ENCODE measurements at regions of chr15 and their contacts with region 1.

Region 1: DNA sequence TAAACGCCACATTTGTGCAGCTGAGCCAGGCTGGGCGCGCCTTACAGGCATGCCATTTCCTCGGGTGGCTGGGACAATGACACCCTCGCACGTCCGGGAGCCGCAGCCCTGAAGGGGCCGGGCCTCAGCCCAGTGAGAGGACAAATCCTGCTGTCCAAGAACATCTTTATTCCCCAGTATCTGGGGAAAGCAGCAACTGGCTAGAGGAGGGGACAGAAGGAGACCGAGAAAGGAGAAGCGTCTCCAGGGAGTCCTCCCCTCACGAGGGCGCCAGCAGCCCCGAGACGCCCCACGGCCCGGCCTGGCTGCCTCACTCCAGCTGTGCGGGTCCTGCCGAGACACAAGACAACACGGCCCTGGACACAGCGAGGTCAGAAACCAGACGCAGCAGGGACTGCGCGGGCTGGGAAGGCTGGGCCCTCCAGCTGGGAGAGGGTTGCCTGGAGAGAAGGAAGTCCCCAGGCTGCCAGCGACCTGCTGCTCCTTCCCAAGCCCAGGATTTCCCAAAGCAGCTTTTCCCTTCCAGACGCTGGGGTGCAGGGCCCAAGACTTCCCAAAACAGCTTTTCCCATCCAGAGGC is 130.2 kb downstream of the CHSY1 start:
- DNase-seq: peak; percentile 87
- ATAC-seq: peak; percentile 89 to 95 (median 93)
- H3K4me3 ChIP-seq: peak overlapping the region in 9 of 10 donors; percentile 13 to 50 (median 39)
- H3K27ac ChIP-seq: peak overlapping the region; percentile 5 to 94 (median 72)
- H3K4me1 ChIP-seq: peaks cover 13 to 67% (median 17%) of the 10 kb centered on the region in 9 donors
- H3K27me3 ChIP-seq: no peaks in the 10 kb centered on the region
- CTCF ChIP-seq: peak in 6 of 9 donors; percentile 39 to 67 (median 50)

Region 2: GRCh38 chr15:100627789-100628395 is 493.7 kb before region 1 on chr15:
- intact Hi-C with region 1: no loop called
- DNase-seq: peak in 1 of 2 donors; percentile 44
- ATAC-seq: peak in 7 of 8 donors; percentile 41 to 81 (median 78)
- H3K4me3 ChIP-seq: no peak overlapping the region
- H3K27ac ChIP-seq: no peak overlapping the region
- H3K4me1 ChIP-seq: peaks cover 0 to 12% (median 0%) of the 10 kb centered on the region in 9 donors
- H3K27me3 ChIP-seq: no peaks in the 10 kb centered on the region
- CTCF ChIP-seq: peak; percentile 69 to 89 (median 86)

Region 3: DNA sequence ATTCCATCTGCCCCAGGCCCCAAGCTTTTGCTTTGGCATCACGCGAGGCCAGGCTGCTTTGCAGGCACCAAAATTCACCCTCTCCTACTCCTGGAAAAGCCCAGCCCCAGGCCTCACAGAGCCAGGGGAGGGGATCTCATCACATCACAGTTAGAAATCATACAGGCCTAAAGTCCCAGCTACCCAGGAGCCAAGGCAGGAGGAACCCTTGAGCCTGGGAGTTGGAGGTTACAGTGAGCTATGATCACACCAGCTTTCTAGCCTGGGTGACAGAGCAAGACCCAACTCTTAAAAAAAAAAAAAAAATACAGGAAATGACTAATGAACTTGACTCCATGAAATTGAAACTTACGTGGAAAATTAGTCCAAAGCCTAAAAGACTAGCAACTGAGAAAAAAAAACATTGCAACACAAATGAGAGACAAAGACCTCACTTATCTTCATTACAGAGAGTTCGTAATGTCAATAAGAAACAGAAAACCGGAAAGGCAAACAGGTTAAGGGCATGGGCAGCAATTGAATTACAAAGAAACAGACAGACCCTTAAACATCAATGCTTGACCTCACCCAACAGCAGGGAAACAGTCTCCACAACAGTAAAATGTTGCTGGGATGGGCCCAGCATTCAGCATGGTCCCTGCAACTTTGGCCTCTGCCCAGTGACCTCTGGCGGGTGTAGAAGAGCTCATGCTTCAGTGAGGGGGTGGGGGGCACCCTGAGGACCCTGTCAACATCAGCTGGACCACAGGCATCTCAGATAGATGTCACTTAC is 50.9 kb before region 1 on chr15:
- intact Hi-C with region 1: no loop called
- DNase-seq: no peak
- ATAC-seq: peak; percentile 62 to 87 (median 78)
- H3K4me3 ChIP-seq: no peak overlapping the region
- H3K27ac ChIP-seq: peak overlapping the region; percentile 13 to 88 (median 68)
- H3K4me1 ChIP-seq: peaks cover 0 to 39% (median 29%) of the 10 kb centered on the region in 9 donors
- H3K27me3 ChIP-seq: no peaks in the 10 kb centered on the region
- CTCF ChIP-seq: no peak

Region 4: DNA sequence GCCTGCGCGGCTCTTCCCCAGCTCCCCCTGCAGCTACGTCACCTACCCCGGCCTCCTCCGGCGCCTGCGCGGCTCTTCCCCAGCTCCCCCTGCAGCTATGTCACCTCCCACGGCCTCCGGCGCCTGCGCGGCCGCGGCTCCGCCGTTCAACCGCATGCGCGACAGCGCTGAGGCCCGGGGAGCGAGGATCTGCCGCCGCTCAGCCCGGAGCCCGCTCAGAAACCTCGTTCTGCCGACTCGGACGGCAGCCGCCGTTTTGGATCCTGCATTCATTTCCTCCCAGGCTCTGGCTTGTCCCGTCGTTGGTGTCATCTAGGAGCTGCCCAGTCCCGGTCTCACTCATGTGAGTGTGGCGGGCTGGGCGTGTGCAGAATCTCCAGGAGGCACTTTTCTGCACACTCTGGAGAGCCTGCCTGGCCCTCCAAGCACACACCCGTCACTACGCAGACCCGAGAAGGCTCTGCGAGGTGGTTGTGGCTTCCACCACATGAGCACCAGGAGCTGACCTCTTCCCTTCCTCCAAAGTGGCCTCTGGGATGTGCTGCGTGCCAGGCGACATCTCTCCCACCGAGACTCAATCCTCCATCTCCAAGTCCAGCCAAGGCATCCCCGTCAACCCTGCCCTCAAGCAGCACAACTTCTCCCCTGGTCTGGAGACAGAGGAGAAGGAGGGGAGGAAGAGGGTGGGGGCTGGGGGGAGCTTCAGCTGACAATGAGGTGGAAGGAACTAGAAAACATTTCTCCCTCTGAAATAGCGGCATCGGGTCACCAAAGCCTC is 35.0 kb before region 1 on chr15:
- intact Hi-C with region 1: no loop called
- DNase-seq: no peak
- ATAC-seq: no peak
- H3K4me3 ChIP-seq: no peak overlapping the region
- H3K27ac ChIP-seq: no peak overlapping the region
- H3K4me1 ChIP-seq: peaks cover 8 to 30% (median 18%) of the 10 kb centered on the region in 9 donors
- H3K27me3 ChIP-seq: no peaks in the 10 kb centered on the region
- CTCF ChIP-seq: no peak

Region 5: DNA sequence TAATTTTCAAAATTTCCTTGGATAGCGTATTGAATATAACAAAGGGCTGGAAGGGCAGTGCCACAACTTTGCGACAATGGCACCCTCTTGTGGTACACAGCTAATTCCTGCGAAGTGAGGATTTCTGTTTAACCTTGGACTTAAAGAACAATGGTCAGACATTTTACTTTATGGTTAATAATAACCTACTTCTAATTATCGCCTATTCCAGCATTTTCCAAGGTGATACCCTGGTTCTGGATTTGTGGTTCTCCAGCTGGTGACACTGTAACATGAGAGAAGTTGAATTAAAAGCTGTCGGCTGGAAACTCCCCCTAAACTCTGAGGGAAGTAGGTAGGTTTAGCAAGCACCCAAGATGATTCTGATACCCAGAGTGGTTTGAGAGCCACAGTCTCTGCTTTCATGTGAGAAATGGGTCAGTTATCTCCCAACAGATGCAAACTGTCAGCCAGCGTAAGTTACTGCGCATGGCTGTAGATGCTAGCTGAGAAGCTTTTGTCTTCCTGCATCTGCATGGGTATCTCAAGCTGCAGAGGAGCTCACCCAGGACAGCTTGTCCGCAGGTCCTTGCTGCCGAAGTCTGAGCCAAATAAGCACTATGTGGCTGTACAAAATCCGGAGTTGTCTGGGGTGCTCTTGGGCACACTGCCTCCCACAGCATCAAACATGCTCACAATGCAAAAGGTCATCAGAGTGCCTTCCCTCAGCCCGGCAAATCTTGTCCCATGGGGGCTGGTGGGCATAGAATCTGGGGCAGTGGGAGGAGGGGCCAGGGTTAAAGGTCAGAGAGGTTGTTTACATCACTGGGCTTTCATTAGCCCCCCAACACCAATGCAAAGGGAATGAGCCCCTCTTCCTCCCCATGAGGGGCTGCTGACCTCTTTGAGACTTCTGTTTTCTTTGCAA is 136.9 kb after region 1 on chr15:
- intact Hi-C with region 1: loop called in 6 of 10 experiments (anchors 2 to 10 kb)
- DNase-seq: peak in 1 of 2 donors; percentile 75
- ATAC-seq: peak in 7 of 8 donors; percentile 43 to 78 (median 67)
- H3K4me3 ChIP-seq: no peak overlapping the region
- H3K27ac ChIP-seq: no peak overlapping the region
- H3K4me1 ChIP-seq: peaks cover 0 to 26% (median 21%) of the 10 kb centered on the region in 9 donors
- H3K27me3 ChIP-seq: no peaks in the 10 kb centered on the region
- CTCF ChIP-seq: peak; percentile 71 to 97 (median 90)

Measured in heart right ventricle (tissue), 16 donors.